Naive thymus-derived CD4-positive, alpha-beta T cell (primary cell): ENCODE measurements at regions of chr20 and their contacts with region 1.

Region 1: GRCh38 chr20:5529331-5530148 is 212.8 kb upstream of the PROKR2 start:
- DNase-seq: peak; percentile 71 to 85 (median 80)
- ATAC-seq: peak; percentile 95
- H3K4me3 ChIP-seq: peak overlapping the region; percentile 14
- H3K4me3 Mint-ChIP-seq: peak overlapping the region in 9 of 10 donors; percentile 13 to 78 (median 69)
- H3K27ac ChIP-seq: peak overlapping the region; percentile 42
- H3K27ac Mint-ChIP-seq: peak overlapping the region; percentile 17 to 93 (median 71)
- H3K4me1 ChIP-seq: peaks cover 3 to 8% of the 10 kb centered on the region in 2 donors
- H3K4me1 Mint-ChIP-seq: peaks cover 12 to 23% (median 16%) of the 10 kb centered on the region in 7 donors
- H3K27me3 ChIP-seq: no peaks in the 10 kb centered on the region
- H3K27me3 Mint-ChIP-seq: no peaks in the 10 kb centered on the region

Region 2: GRCh38 chr20:5557123-5557522 is 27.6 kb after region 1 on chr20:
- CTCF ChIA-PET with region 1: interaction called, 5 read pairs
- POLR2A ChIA-PET with region 1: interaction called, 3 read pairs
- intact Hi-C with region 1: loop called in 1 of 2 experiments (anchors 2 kb)
- DNase-seq: peak in 8 of 9 donors; percentile 24 to 63 (median 41)
- ATAC-seq: peak; percentile 77
- H3K4me3 ChIP-seq: no peak overlapping the region
- H3K4me3 Mint-ChIP-seq: no peak overlapping the region
- H3K27ac ChIP-seq: peak overlapping the region; percentile 11
- H3K27ac Mint-ChIP-seq: peak overlapping the region; percentile 1 to 74 (median 25)
- H3K4me1 ChIP-seq: no peaks in the 10 kb centered on the region
- H3K4me1 Mint-ChIP-seq: peaks cover 2 to 35% (median 13%) of the 10 kb centered on the region in 7 donors
- H3K27me3 ChIP-seq: no peaks in the 10 kb centered on the region
- H3K27me3 Mint-ChIP-seq: no peaks in the 10 kb centered on the region

Region 3: GRCh38 chr20:5749952-5750779 is 220.6 kb after region 1 on chr20 and contains the start of gene SHLD1:
- CTCF ChIA-PET with region 1: interaction called, 5 read pairs
- POLR2A ChIA-PET with region 1: no interaction called
- intact Hi-C with region 1: loop called in 1 of 2 experiments (anchors 1 kb)
- DNase-seq: peak; percentile 56 to 86 (median 80)
- ATAC-seq: peak; percentile 98
- H3K4me3 ChIP-seq: peak within 1 kb of the TSS; percentile 70
- H3K4me3 Mint-ChIP-seq: peak within 1 kb of the TSS; percentile 81 to 97 (median 92)
- H3K27ac ChIP-seq: peak within 1 kb of the TSS; percentile 79
- H3K27ac Mint-ChIP-seq: peak within 1 kb of the TSS; percentile 91 to 100 (median 94)
- H3K4me1 ChIP-seq: peaks cover 5 to 14% of the 10 kb centered on the region in 2 donors
- H3K4me1 Mint-ChIP-seq: peaks cover 15 to 38% (median 28%) of the 10 kb centered on the region in 7 donors
- H3K27me3 ChIP-seq: no peaks in the 10 kb centered on the region
- H3K27me3 Mint-ChIP-seq: peaks cover 0 to 4% (median 0%) of the 10 kb centered on the region in 5 donors
- total RNA-seq, gene SHLD1: 12.1 to 14.2 (median 13.2) TPM

Region 4: GRCh38 chr20:5822569-5822968 is 293.0 kb after region 1 on chr20:
- CTCF ChIA-PET with region 1: no interaction called
- POLR2A ChIA-PET with region 1: no interaction called
- intact Hi-C with region 1: loop called in 1 of 2 experiments (anchors 1 kb)
- DNase-seq: no peak
- ATAC-seq: peak; percentile 47
- H3K4me3 ChIP-seq: no peak overlapping the region
- H3K4me3 Mint-ChIP-seq: no peak overlapping the region
- H3K27ac ChIP-seq: no peak overlapping the region
- H3K27ac Mint-ChIP-seq: no peak overlapping the region
- H3K4me1 ChIP-seq: no peaks in the 10 kb centered on the region
- H3K4me1 Mint-ChIP-seq: peaks cover 0 to 29% (median 15%) of the 10 kb centered on the region in 7 donors
- H3K27me3 ChIP-seq: no peaks in the 10 kb centered on the region
- H3K27me3 Mint-ChIP-seq: no peaks in the 10 kb centered on the region

Region 5: DNA sequence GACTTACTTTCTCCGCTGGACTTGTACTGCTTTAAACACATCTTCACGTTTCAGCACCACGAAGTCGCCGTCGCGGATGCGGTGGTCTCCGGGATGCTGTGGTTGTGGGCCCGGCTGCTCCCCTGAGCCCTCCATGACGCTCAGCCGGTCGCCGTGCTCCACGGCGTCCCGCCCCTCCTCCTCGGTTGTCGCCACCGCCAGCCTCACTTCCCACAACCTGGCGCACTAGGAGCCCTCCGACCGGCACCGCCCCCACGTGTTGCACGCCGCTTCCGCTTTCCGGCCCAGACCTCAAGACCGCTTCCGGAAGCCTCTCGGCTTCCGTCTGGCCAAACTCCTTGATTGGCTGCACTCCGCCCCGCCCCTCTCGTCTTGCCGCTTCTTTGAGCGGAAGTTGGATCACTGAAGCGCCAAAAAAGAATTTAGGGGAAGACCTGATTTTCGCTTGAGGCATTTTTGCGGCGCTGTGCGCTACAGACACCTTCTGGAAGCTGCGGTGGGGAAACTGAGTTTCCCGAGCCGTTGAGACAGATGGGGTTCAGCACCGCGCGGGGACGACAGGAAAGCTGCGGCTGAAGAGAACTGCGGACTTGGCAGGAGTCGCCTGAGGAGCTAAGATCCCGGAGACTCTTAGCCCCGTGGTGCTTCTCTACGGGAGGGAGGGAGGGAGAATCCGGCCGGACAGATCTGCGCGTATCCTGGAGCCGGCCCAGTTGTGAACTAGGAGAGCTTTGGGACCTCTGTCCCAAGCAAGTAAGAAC is 420.9 kb after region 1 on chr20 and contains the starts of genes MCM8 and TRMT6:
- CTCF ChIA-PET with region 1: interaction called, 3 read pairs
- POLR2A ChIA-PET with region 1: no interaction called
- intact Hi-C with region 1: loop called (anchors 1 kb)
- DNase-seq: peak; percentile 82 to 97 (median 95)
- ATAC-seq: peak; percentile 97
- H3K4me3 ChIP-seq: peak within 1 kb of the TSS; percentile 89
- H3K4me3 Mint-ChIP-seq: peak within 1 kb of the TSS; percentile 91 to 99 (median 96)
- H3K27ac ChIP-seq: peak within 1 kb of the TSS; percentile 82
- H3K27ac Mint-ChIP-seq: peak within 1 kb of the TSS; percentile 91 to 100 (median 97)
- H3K4me1 ChIP-seq: peaks cover 13 to 17% of the 10 kb centered on the region in 2 donors
- H3K4me1 Mint-ChIP-seq: peaks cover 7 to 61% (median 45%) of the 10 kb centered on the region in 7 donors
- H3K27me3 ChIP-seq: no peaks in the 10 kb centered on the region
- H3K27me3 Mint-ChIP-seq: peaks cover 0 to 4% (median 0%) of the 10 kb centered on the region in 5 donors
- total RNA-seq, gene MCM8: 2.6 to 22.7 (median 10.8) TPM
- total RNA-seq, gene TRMT6: 14.5 to 18.5 (median 17.8) TPM

Region 6: GRCh38 chr20:6074145-6074561 is 544.6 kb after region 1 on chr20:
- CTCF ChIA-PET with region 1: interaction called, 59 read pairs
- POLR2A ChIA-PET with region 1: no interaction called
- intact Hi-C with region 1: loop called (anchors 1 kb)
- DNase-seq: peak in 3 of 9 donors; percentile 27 to 34 (median 30)
- ATAC-seq: peak; percentile 41
- H3K4me3 ChIP-seq: no peak overlapping the region
- H3K4me3 Mint-ChIP-seq: no peak overlapping the region
- H3K27ac ChIP-seq: no peak overlapping the region
- H3K27ac Mint-ChIP-seq: peak overlapping the region in 2 of 9 donors; percentile 2 to 59
- H3K4me1 ChIP-seq: no peaks in the 10 kb centered on the region
- H3K4me1 Mint-ChIP-seq: peaks cover 0 to 7% (median 3%) of the 10 kb centered on the region in 7 donors
- H3K27me3 ChIP-seq: no peaks in the 10 kb centered on the region
- H3K27me3 Mint-ChIP-seq: peaks cover 0 to 2% (median 0%) of the 10 kb centered on the region in 5 donors